Head of caudate nucleus (tissue), 42 donors: ENCODE measurements at regions of chr11 and their contacts with region 1.

Region 1: DNA sequence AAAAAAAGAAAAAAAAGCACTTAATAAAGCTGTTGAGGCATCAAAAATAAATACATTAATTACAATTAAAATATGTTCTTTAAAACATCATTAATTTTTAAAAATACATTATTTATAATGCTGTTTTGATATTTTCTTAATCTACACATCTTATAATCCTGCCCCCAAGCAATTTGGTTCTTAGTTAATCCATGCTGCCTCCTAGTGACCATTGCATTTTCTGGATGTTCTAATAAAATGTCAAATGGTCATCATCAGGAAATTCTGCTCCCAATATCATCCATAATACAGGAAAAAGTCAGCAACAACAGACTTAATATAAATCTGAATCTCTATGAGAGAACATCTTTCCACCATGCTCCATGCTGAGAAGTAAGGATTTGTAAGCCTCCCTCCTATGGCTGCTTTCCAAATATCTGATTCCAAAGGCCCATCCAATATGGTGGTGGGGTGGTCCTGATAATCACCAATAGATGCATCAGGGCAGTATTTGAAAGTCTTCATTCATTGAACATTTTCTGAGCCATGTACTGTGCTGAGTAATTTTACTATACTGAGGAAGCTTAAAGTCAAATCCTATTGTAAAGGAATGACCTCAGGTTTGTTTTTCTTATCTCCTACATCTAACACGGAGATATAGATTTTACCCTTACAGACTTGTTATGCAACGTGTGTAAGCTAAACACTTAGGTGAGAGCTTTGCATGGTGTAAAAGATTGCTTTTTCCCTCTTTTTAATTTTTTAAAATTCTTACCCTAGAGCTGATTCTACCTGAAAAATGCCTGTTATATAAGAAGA is 124.7 kb upstream of the BMAL1 start:
- DNase-seq: peak in 4 of 42 donors; percentile 15 to 67 (median 40)

Region 2: GRCh38 chr11:12914400-12914912 is 238.5 kb before region 1 on chr11:
- intact Hi-C with region 1: loop called (anchors 10 kb)
- DNase-seq: peak; percentile 68 to 95 (median 90)

Region 3: DNA sequence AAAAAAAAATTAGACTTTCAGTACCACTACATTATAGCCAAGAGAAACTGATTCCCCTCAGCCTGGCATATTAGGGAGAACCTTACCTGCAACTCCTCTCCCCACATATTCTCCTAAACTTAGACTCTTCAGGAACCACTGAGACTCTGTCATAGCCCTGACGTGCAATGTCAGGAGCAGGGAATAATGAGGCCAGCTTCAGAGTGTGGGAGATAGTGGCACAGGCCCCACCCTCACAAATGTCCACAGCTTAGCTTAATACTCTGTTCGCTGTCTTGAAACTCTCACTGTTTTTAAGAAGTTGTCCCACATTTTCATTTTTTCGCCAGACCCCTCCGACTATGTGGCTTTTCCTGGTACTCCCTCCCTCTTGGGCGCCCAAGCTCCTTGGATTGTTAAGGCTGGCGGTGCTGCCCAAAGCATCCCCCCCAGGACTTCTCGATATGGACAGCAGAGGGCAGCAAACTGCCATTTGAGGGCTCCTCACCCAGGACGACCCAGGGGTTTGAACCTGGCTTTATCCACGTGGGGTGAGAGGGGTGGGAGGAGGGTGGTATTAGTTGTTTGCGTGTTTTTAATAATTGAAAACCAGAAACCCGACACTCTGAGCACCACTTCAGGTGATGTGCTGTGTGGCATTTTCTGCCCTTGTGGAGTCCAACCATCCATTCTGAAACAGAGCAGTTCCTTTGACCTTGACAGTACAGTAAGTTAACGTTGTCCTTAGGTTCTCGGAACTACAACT is 189.0 kb before region 1 on chr11:
- intact Hi-C with region 1: loop called (anchors 5 kb)
- DNase-seq: peak; percentile 39 to 89 (median 70)

Region 4: GRCh38 chr11:13261591-13262061 is 108.7 kb after region 1 on chr11:
- intact Hi-C with region 1: no loop called
- DNase-seq: no peak